Posterior vena cava (tissue), 2 donors: ENCODE measurements at regions of chr4 and their contacts with region 1.

Region 1: GRCh38 chr4:89242864-89243732 is 64.5 kb downstream of the GPRIN3 start:
- DNase-seq: no peak

Region 2: DNA sequence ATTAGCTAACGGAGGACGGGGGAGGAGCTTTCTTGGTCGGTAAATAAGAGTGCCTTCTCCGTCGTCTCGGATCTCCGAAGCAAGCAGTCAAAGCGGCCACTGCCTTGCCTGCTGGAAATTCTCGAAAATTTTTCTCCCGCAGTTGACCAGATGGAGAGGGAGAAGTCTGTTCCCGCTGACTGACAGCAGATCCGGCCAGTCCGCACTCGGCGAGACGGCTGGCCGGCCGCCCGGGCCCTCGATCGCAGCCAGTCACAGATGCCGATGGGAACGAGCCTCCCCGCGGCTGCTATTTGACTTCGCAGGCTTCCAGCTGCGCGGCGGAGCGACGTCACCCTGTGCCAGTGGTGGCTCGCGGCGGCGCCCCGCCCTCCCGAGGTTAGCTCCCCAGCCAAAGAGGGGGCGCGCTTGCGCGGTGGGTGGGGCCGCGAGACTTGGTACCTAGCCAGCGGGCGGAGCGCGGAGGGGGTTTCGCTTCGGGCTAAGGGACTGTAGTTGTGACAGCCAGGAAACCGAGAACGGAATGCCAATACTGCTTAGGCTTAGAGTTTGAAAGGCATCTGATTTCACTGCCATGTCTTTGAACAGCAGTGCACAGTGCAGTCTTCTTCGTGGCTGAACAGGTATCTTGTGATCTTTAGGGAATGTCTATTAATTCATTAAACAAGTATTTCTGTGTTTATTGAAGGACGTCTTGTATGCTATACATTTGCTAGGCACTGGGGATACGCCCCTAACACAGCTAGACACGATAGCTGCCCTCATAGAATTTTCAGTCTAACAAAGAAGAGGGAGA is 958.5 kb before region 1 on chr4 and contains the start of gene PPM1K:
- intact Hi-C with region 1: no loop called
- DNase-seq: peak; percentile 100
- total RNA-seq, gene PPM1K: 23.8 to 31.6 TPM

Region 3: DNA sequence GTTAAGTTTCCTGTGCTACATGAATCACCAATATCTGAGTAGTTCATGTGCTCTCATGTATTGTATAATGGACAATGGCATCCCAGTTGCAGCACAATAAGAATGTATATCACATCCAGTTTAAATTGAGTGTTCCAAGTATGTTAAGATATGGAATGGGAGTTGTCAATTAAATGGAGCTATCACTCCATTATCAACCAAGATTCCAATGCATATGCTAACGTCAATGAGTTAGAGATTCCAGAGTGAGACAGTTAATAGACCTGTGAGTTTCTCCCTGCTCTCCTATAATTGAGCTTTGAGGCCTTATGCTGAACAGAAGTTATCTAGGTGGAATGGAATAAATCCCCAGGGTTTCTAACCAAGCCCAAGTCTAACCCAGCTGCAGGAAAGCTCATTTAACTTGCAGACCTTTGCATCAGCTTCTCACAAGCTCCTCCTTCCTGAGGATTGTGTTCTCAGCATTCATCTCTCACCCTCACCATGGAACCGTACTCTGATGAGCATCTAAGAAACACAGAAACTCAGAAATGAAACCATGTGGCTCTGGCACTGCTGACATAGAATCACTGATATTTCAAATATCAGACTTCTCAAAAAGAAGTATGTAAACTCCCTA is 46.9 kb before region 1 on chr4:
- intact Hi-C with region 1: no loop called
- DNase-seq: no peak

Region 4: GRCh38 chr4:89307446-89308160 is 64.5 kb after region 1 on chr4 and contains the start of gene GPRIN3:
- intact Hi-C with region 1: loop called in 1 of 2 experiments (anchors 2 kb)
- DNase-seq: peak; percentile 87
- total RNA-seq, gene GPRIN3: 3.5 to 5.4 TPM